Mammary epithelial cell (primary cell): ENCODE measurements at regions of chr3 and their contacts with region 1.

Region 1: GRCh38 chr3:9091486-9092235 is 128.4 kb upstream of the RAD18 start:
- DNase-seq: no peak
- H3K4me3 ChIP-seq: no peak overlapping the region
- H3K27ac ChIP-seq: no peak overlapping the region
- H3K4me1 ChIP-seq: peaks cover 11% of the 10 kb centered on the region
- H3K27me3 ChIP-seq: no peaks in the 10 kb centered on the region
- CTCF ChIP-seq: no peak

Region 2: GRCh38 chr3:8822141-8822540 is 269.5 kb before region 1 on chr3:
- CTCF ChIA-PET with region 1: no interaction called
- dilution Hi-C with region 1: no loop called
- in situ Hi-C with region 1: no loop called
- intact Hi-C with region 1: no loop called
- DNase-seq: peak; percentile 51
- H3K4me3 ChIP-seq: no peak overlapping the region
- H3K27ac ChIP-seq: no peak overlapping the region
- H3K4me1 ChIP-seq: peaks cover 6% of the 10 kb centered on the region
- H3K27me3 ChIP-seq: no peaks in the 10 kb centered on the region
- CTCF ChIP-seq: no peak

Region 3: GRCh38 chr3:9047452-9048346 is 44.0 kb before region 1 on chr3:
- CTCF ChIA-PET with region 1: no interaction called
- dilution Hi-C with region 1: loop called (anchors 5 kb)
- in situ Hi-C with region 1: no loop called
- intact Hi-C with region 1: no loop called
- DNase-seq: no peak
- H3K4me3 ChIP-seq: no peak overlapping the region
- H3K27ac ChIP-seq: no peak overlapping the region
- H3K4me1 ChIP-seq: no peaks in the 10 kb centered on the region
- H3K27me3 ChIP-seq: no peaks in the 10 kb centered on the region
- CTCF ChIP-seq: no peak

Region 4: GRCh38 chr3:9130345-9131305 is 39.0 kb after region 1 on chr3:
- CTCF ChIA-PET with region 1: no interaction called
- dilution Hi-C with region 1: loop called (anchors 5 kb)
- in situ Hi-C with region 1: no loop called
- intact Hi-C with region 1: no loop called
- DNase-seq: no peak
- H3K4me3 ChIP-seq: no peak overlapping the region
- H3K27ac ChIP-seq: no peak overlapping the region
- H3K4me1 ChIP-seq: no peaks in the 10 kb centered on the region
- H3K27me3 ChIP-seq: no peaks in the 10 kb centered on the region
- CTCF ChIP-seq: no peak